ENCODE measurements at regions of chr16 and their contacts with region 1.

Region 1: DNA sequence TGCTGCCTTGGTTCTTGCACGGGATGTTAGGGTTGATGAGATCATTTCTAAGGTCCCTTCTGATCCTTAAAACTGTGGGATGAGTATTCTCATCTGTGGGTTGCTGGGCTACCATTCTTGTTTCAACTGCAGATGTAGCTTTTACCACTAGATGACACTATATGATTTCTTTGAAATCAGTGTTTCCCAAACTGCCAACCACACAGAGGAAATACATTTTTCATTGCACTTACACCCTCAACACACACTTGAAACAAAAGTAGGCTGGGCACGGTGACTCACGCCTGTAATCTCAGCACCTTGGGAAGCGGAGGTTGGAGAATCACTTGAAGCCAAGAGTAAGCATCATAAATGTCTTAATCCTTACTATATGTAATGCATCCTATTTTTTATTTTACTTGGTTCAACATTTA is 15.3 kb downstream of the LCMT1 start:
- DNase-seq: no peak
- ATAC-seq: peak; percentile 80
- H3K4me3 ChIP-seq: no peak overlapping the region
- H3K27ac ChIP-seq: no peak overlapping the region
- H3K4me1 ChIP-seq: no peaks in the 10 kb centered on the region
- H3K27me3 ChIP-seq: no peaks in the 10 kb centered on the region
- CTCF ChIP-seq: peak; percentile 87

Region 2: DNA sequence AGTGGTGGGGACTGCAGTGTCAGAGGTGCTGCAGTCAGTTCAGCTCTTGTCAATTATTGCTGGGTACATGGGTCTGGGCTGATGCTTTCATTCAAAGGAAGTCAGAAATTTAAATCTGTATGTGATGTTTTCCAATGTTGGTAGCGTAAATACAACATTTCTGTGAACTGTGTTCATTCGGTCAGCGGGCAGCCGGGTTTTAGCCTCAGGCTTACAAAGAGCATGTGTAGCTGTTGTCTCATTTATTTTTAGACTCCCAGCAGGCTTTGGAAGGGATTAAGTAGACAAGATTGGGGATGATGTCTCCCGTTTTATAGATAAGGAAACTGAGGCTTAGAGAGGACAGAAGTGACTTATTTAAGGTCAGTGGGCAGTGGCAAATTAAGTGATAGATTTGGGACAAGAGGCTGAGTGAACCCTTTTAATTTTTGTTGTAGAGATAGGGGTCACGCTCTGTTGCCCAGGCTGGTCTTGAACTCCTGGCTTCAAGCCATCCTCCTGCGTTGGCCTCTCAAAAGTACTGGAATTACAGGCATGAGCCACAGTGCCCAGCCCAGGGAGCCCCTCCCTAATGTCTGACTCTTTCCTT is 98.0 kb after region 1 on chr16:
- CTCF ChIA-PET with region 1: interaction called, 19 read pairs
- POLR2A ChIA-PET with region 1: no interaction called
- in situ Hi-C with region 1: no loop called
- intact Hi-C with region 1: loop called (anchors 5 kb)
- DNase-seq: no peak
- ATAC-seq: no peak
- H3K4me3 ChIP-seq: no peak overlapping the region
- H3K27ac ChIP-seq: no peak overlapping the region
- H3K4me1 ChIP-seq: no peaks in the 10 kb centered on the region
- H3K27me3 ChIP-seq: no peaks in the 10 kb centered on the region
- CTCF ChIP-seq: no peak

Measured in Panc1 (cell line).